ENCODE measurements at regions of chr12 and their contacts with region 1.

Region 1: GRCh38 chr12:24991209-24992049 is 42.5 kb upstream of the BCAT1 start:
- DNase-seq: no peak

Region 2: GRCh38 chr12:25121916-25122315 is 130.5 kb after region 1 on chr12:
- intact Hi-C with region 1: loop called in 1 of 2 experiments (anchors 10 kb)
- DNase-seq: no peak